Cardiac septum (tissue), 1 donor: ENCODE measurements at regions of chr6 and their contacts with region 1.

Region 1: DNA sequence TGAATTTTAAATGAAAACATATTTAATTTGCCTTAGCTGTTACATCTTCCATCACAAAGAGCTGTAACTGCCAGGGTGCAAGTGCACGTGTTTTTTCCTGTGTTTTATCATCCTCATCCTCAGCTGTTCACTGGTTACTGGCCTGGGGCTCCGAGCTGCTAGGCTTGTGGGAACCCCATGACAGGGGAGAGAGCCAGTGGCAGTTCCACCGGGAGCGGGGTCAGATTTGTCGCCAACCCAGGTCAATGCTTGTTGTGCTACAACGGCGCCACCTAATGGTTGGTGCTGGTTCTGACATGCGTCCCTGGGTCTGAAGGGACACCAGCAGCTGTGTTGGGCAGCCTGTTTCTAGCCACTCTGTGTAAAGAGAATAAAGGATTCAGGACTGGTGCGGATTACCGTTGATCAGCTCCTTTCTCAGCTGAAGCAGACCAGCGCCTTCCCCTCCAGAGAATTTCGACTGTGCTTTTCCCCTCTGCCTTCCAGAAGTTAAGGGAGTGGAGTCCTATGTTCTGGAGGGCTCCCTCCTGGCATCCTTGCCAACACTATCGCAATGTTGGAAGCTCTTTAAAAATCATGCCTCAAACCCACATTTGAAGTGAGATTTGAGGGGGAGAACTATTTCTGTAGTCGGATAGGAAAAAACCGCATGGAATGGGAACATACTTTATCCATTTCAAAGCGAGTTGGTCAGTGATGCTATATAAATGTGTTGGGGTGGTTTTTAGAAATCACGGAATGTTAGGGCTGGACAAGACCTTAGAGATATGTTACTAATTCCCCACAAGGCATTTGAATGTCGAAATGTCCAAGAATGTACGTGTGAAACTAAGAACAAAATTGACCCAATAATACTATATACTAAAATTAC is 32.1 kb downstream of the SUMO4 start:
- DNase-seq: peak; percentile 94

Region 2: DNA sequence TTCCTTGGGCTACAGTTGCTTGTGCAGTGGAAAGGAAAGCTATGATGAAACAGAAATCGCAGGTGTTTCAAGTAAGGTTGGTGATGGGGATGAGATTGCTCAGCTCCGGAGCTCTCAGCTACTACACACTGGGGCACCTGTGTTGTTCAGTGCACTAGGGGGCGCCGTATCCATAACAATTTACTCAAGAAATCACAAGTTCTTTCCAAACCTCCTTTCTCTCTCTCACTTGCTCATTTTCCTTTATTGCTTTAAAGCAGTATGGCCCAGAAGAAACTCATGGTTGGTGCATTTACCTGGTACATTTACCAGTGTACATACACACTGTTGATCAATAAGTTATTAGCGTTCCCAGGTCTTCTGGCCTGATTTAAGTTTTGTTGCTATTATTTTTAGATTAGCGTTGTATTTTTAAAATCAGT is 349.8 kb before region 1 on chr6:
- intact Hi-C with region 1: loop called (anchors 1 kb)
- DNase-seq: peak; percentile 79

Region 3: GRCh38 chr6:149484733-149485700 is 52.9 kb after region 1 on chr6 and contains the start of gene ZC3H12D:
- intact Hi-C with region 1: no loop called
- DNase-seq: no peak
- total RNA-seq, gene ZC3H12D: 0.35 TPM

Region 4: DNA sequence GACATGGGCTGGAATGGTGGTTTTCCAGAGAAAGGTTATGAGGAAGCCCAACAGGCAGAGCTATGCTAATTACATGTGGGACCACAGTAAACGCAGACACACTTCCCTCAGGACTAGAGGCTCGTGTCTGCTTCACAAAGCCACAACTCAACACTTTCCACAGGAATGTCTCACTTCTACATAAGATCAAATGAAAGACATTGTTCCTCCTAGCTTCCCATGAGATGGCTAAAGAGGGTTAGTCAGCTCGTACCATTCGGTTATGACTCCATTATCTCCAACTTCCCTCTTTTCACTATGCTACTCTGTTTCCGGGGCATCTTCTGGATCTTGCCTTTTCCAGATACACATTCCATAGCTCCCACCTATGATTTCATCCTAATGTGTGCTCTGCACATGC is 81.8 kb after region 1 on chr6:
- intact Hi-C with region 1: loop called (anchors 5 kb)
- DNase-seq: no peak